ENCODE measurements at regions of chr3 and their contacts with region 1.

Region 1: DNA sequence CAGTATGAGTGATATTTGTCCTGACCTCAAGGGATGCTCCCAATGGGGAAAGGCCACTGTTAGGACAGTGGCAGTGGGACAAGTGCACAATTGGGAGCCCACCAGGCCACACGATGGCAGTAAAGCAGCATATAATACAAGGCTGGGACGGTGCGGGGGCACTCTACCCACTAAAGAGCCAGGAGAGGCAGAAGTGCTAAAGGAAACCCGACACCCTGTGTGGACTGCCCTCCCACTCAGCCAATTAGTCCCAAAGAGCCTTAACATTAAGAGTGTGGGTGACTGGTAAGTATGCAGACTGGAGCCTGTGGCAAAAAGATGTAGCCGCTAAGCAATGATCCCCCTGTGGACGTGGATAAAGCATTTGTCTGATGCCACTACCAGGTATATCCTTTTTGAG is 8.2 kb upstream of the ZNF589 start:
- DNase-seq: peak; percentile 21 to 54 (median 44)
- ATAC-seq: peak; percentile 92
- H3K4me3 ChIP-seq: no peak overlapping the region
- H3K4me3 Mint-ChIP-seq: no peak overlapping the region
- H3K27ac ChIP-seq: no peak overlapping the region
- H3K27ac Mint-ChIP-seq: no peak overlapping the region
- H3K4me1 ChIP-seq: no peaks in the 10 kb centered on the region
- H3K4me1 Mint-ChIP-seq: peaks cover 0 to 6% (median 3%) of the 10 kb centered on the region in 7 donors
- H3K27me3 ChIP-seq: no peaks in the 10 kb centered on the region
- H3K27me3 Mint-ChIP-seq: peaks cover 0 to 6% (median 0%) of the 10 kb centered on the region in 5 donors

Region 2: GRCh38 chr3:47522082-47522987 is 710.4 kb before region 1 on chr3:
- CTCF ChIA-PET with region 1: no interaction called
- POLR2A ChIA-PET with region 1: no interaction called
- intact Hi-C with region 1: no loop called
- DNase-seq: peak; percentile 36 to 75 (median 60)
- ATAC-seq: peak; percentile 97
- H3K4me3 ChIP-seq: no peak overlapping the region
- H3K4me3 Mint-ChIP-seq: no peak overlapping the region
- H3K27ac ChIP-seq: no peak overlapping the region
- H3K27ac Mint-ChIP-seq: peak overlapping the region in 2 of 9 donors; percentile 15 to 67
- H3K4me1 ChIP-seq: no peaks in the 10 kb centered on the region
- H3K4me1 Mint-ChIP-seq: peaks cover 0 to 11% (median 0%) of the 10 kb centered on the region in 7 donors
- H3K27me3 ChIP-seq: no peaks in the 10 kb centered on the region
- H3K27me3 Mint-ChIP-seq: peaks cover 0 to 8% (median 0%) of the 10 kb centered on the region in 5 donors

Region 3: GRCh38 chr3:48001991-48002390 is 230.7 kb before region 1 on chr3:
- CTCF ChIA-PET with region 1: no interaction called
- POLR2A ChIA-PET with region 1: no interaction called
- intact Hi-C with region 1: no loop called
- DNase-seq: no peak
- ATAC-seq: no peak
- H3K4me3 ChIP-seq: no peak overlapping the region
- H3K4me3 Mint-ChIP-seq: no peak overlapping the region
- H3K27ac ChIP-seq: no peak overlapping the region
- H3K27ac Mint-ChIP-seq: no peak overlapping the region
- H3K4me1 ChIP-seq: no peaks in the 10 kb centered on the region
- H3K4me1 Mint-ChIP-seq: peaks cover 0 to 8% (median 3%) of the 10 kb centered on the region in 7 donors
- H3K27me3 ChIP-seq: no peaks in the 10 kb centered on the region
- H3K27me3 Mint-ChIP-seq: no peaks in the 10 kb centered on the region

Region 4: DNA sequence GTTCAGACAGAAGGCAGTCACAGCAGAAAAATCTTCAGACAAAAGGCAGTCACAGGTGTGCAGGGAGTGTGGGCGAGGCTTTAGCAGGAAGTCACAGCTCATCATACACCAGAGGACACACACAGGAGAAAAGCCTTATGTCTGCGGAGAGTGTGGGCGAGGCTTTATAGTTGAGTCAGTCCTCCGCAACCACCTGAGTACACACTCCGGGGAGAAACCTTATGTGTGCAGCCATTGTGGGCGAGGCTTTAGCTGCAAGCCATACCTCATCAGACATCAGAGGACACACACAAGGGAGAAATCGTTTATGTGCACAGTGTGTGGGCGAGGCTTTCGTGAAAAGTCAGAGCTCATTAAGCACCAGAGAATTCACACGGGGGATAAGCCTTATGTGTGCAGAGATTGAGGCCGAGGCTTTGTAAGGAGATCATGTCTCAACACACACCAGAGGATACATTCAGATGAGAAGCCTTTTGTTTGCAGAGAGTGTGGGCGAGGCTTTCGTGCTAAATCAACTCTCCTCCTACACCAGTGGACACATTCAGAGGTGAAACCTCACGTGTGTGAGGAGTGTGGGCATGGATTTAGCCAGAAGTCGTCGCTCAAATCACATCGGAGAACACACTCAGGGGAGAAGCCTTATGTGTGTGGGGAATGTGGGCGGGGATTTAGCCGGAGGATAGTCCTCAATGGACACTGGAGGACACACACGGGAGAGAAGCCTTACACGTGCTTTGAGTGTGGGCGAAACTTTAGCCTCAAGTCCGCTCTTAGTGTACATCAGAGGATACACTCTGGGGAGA is 35.8 kb after region 1 on chr3:
- CTCF ChIA-PET with region 1: no interaction called
- POLR2A ChIA-PET with region 1: interaction called, 3 read pairs
- intact Hi-C with region 1: loop called in 1 of 2 experiments (anchors 2 kb)
- DNase-seq: peak; percentile 25 to 92 (median 80)
- ATAC-seq: peak; percentile 97
- H3K4me3 ChIP-seq: peak overlapping the region; percentile 40
- H3K4me3 Mint-ChIP-seq: peak overlapping the region; percentile 74 to 93 (median 82)
- H3K27ac ChIP-seq: peak overlapping the region; percentile 71
- H3K27ac Mint-ChIP-seq: peak overlapping the region; percentile 89 to 99 (median 93)
- H3K4me1 ChIP-seq: peaks cover 14 to 26% of the 10 kb centered on the region in 2 donors
- H3K4me1 Mint-ChIP-seq: peaks cover 17 to 40% (median 39%) of the 10 kb centered on the region in 7 donors
- H3K27me3 ChIP-seq: no peaks in the 10 kb centered on the region
- H3K27me3 Mint-ChIP-seq: no peaks in the 10 kb centered on the region